ENCODE measurements at regions of chr6 and their contacts with region 1.

Region 1: DNA sequence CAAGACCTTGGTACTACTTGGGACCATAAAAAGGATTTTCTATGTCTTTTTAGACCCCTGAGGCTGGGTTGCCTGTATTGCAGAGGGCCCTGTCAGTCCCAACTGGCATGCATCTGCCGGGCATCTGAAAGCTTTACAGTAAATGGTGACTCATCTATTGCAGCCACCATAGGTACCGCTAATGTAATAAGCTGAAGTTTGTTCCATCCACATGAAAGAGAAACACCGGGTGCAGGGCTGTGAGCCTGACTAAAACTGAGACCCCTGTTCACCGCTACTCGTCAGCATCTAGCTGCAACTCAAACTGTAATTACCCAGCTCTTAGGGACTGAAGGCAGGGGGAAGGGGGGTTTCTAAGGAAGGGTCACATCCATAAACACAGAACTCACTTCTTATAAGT is 49.5 kb downstream of the TRERF1 start:
- DNase-seq: peak; percentile 6 to 45
- H3K4me3 ChIP-seq: no peak overlapping the region
- H3K27ac ChIP-seq: no peak overlapping the region
- H3K4me1 ChIP-seq: peaks cover 52% of the 10 kb centered on the region
- H3K27me3 ChIP-seq: no peaks in the 10 kb centered on the region
- CTCF ChIP-seq: no peak

Region 2: DNA sequence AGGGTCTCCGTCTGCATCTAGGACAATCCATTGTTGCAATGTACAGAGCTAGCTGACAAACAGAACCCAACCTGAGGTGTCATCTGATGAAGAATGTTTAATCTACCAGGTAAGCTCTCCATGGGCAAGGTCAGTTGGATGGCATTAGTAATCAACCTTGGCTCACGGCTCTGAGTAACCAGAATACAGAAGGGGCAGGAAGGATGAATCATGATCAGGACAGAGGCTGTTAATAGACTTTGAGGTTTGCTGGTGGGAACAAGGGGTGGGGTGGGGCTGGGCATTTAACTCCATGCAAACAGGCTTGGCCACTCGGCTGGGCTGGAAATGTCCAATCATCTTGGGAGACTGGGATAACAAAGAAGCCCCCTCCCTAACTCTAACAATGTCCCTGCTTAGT is 107.4 kb before region 1 on chr6:
- CTCF ChIA-PET with region 1: no interaction called
- POLR2A ChIA-PET with region 1: interaction called, 11 read pairs
- intact Hi-C with region 1: loop called (anchors 5 kb)
- DNase-seq: peak; percentile 67 to 97
- H3K4me3 ChIP-seq: no peak overlapping the region
- H3K27ac ChIP-seq: peak overlapping the region; percentile 91
- H3K4me1 ChIP-seq: peaks cover 69% of the 10 kb centered on the region
- H3K27me3 ChIP-seq: no peaks in the 10 kb centered on the region
- CTCF ChIP-seq: no peak

Region 3: DNA sequence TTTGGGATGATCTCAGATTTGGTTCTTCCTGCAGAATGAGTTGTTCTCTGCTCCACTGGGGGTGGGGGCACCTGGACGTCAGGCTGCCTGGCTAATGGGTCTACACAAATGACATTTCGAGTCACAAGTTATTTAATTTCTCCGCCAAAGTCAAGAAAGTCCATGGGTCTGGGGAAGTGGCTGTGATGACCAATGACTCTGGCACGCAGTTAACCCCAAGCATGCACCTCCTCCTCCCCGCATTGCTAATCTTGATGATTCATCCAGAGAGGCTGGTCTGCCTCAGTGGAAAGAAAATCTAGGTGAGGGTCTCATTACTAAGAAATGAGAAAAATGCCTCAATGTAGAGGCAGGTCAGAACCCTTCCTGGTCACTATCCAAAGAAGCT is 86.2 kb before region 1 on chr6:
- CTCF ChIA-PET with region 1: interaction called, 5 read pairs
- POLR2A ChIA-PET with region 1: no interaction called
- intact Hi-C with region 1: loop called (anchors 1 kb)
- DNase-seq: peak; percentile 79 to 95
- H3K4me3 ChIP-seq: no peak overlapping the region
- H3K27ac ChIP-seq: peak overlapping the region; percentile 93
- H3K4me1 ChIP-seq: peaks cover 58% of the 10 kb centered on the region
- H3K27me3 ChIP-seq: no peaks in the 10 kb centered on the region
- CTCF ChIP-seq: no peak

Region 4: DNA sequence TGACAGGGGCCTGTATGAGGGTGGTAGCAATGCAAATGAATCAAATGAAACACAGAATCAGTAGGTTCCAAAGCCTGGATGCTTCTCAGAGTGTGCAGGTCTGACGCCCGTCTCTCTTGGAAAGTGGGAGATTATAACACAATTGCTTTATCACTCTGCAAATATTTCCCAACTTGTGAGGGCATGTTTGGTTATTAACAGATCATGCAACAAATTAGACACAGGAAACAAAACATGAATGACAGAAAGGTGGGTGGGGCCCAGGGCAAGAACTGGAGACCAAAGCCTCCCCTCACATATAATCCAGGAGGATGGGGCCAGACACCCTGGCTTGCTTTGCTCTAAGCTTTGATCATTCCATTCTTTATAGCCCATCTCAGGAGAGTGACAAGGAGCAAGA is 75.9 kb before region 1 on chr6:
- CTCF ChIA-PET with region 1: no interaction called
- POLR2A ChIA-PET with region 1: no interaction called
- intact Hi-C with region 1: no loop called
- DNase-seq: no peak
- H3K4me3 ChIP-seq: no peak overlapping the region
- H3K27ac ChIP-seq: 0 out of 2 replicates have a peak overlapping the region, but pooled peaks have one; percentile 11
- H3K4me1 ChIP-seq: peaks cover 8% of the 10 kb centered on the region
- H3K27me3 ChIP-seq: no peaks in the 10 kb centered on the region
- CTCF ChIP-seq: no peak

Region 5: GRCh38 chr6:42338663-42339218 is 63.4 kb before region 1 on chr6:
- CTCF ChIA-PET with region 1: no interaction called
- POLR2A ChIA-PET with region 1: no interaction called
- intact Hi-C with region 1: loop called (anchors 2 kb)
- DNase-seq: peak; percentile 70 to 97
- H3K4me3 ChIP-seq: peak overlapping the region; percentile 15; the same call in 1 of the 2 replicates
- H3K27ac ChIP-seq: peak overlapping the region; percentile 93
- H3K4me1 ChIP-seq: peaks cover 39% of the 10 kb centered on the region
- H3K27me3 ChIP-seq: no peaks in the 10 kb centered on the region
- CTCF ChIP-seq: no peak

Region 6: GRCh38 chr6:42511803-42512422 is 109.7 kb after region 1 on chr6:
- CTCF ChIA-PET with region 1: no interaction called
- POLR2A ChIA-PET with region 1: interaction called, 13 read pairs
- intact Hi-C with region 1: no loop called
- DNase-seq: no peak
- H3K4me3 ChIP-seq: no peak overlapping the region
- H3K27ac ChIP-seq: no peak overlapping the region
- H3K4me1 ChIP-seq: no peaks in the 10 kb centered on the region
- H3K27me3 ChIP-seq: no peaks in the 10 kb centered on the region
- CTCF ChIP-seq: no peak

Region 7: DNA sequence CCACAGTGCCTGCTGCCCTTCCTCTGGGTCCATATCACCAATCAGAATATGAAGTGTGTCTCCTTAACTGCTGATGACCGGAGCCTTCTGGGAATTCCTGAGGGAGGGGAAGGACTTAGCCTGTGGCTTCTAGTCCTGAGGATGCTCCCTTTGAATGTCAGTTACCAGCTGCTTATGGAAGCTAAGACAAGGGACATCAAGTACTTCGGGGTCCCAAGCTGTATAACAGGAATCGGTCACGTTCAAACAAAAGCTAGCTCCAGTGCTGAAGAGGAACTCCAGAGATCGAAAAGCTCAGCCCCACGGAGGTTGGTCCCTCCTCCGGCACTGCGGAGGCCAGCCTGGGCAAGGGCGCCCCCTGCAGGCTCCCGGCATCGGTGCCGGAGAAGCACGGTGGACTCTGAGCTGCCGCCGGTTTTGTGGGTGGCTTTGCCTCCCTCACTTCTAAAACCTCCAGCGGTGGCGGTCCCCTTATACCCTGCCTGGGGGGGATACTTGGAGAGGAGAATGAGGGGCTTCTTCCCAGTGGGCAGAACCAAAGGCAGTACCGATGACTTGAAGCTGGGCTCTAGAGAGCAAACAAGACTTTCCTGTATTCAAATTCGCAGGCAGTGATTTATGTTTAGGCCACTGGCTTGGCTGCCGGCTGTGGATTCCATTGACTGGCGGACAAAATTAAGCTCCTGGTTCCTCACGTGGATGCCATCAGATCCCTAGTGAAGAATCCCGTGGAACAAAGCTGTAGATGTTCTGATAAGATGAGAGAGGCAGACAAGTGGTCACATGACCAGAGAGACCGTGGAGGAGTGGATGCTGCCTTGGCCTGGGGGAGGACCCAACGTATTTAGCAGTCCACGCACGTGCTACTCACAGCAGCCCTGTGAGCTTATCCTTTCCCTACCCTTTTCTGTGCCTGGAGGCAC is 145.5 kb after region 1 on chr6:
- CTCF ChIA-PET with region 1: interaction called, 4 read pairs
- POLR2A ChIA-PET with region 1: no interaction called
- intact Hi-C with region 1: loop called (anchors 5 kb)
- DNase-seq: peak in 1 of 2 experiments; percentile 83
- H3K4me3 ChIP-seq: peak overlapping the region; percentile 51; the same call in 1 of the 2 replicates
- H3K27ac ChIP-seq: no peak overlapping the region
- H3K4me1 ChIP-seq: no peaks in the 10 kb centered on the region
- H3K27me3 ChIP-seq: no peaks in the 10 kb centered on the region
- CTCF ChIP-seq: peak; percentile 96

Region 8: GRCh38 chr6:43477235-43478007 is 1075.2 kb after region 1 on chr6 and contains the start of gene TJAP1:
- CTCF ChIA-PET with region 1: no interaction called
- POLR2A ChIA-PET with region 1: interaction called, 13 read pairs
- intact Hi-C with region 1: no loop called
- DNase-seq: peak; percentile 73 to 93
- H3K4me3 ChIP-seq: peak within 1 kb of the TSS; percentile 91
- H3K27ac ChIP-seq: peak within 1 kb of the TSS; percentile 34
- H3K4me1 ChIP-seq: peaks cover 53% of the 10 kb centered on the region
- H3K27me3 ChIP-seq: no peaks in the 10 kb centered on the region
- CTCF ChIP-seq: no peak
- total RNA-seq, gene TJAP1: 50.5 and 60.9 TPM in 2 replicates